Activated CD8-positive, alpha-beta T cell treated with anti-CD3 and anti-CD28 coated beads for 36 hours (primary cell): ENCODE measurements at regions of chr13 and their contacts with region 1.

Region 1: DNA sequence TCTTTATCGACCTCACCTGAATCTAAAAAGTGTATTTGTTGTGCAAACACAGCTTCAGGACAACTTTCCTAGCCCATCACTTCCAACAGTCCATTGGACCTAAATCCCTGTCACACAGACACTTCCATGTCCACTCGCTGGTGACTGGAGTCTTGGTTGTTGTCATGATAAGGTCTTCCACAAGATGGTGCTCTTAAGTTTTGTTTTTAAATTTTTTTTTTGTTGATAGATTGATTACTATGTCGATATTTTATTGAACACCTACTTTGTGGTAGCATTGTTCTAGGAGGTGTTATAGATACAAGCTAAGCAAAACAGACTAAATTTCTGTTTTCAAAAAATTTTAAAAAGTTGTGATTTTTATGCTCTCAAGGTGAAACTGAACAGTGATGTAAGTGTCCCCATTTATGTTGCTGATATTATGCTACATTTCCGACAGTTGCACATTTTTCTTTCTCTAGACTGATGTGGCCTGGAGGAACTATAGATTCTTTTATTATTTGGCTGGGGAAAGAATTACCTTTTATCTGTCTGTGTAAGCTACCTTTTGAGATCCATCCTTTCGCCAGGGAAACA is 8.1 kb upstream of the ERICH6B start:
- DNase-seq: no peak
- ATAC-seq: no peak
- H3K4me3 Mint-ChIP-seq: no peak overlapping the region
- H3K27ac Mint-ChIP-seq: no peak overlapping the region
- H3K4me1 Mint-ChIP-seq: no peaks in the 10 kb centered on the region
- H3K27me3 Mint-ChIP-seq: peaks cover 24% of the 10 kb centered on the region
- CTCF ChIP-seq: peak; percentile 62

Region 2: GRCh38 chr13:45385907-45386553 is 237.6 kb before region 1 on chr13:
- CTCF ChIA-PET with region 1: no interaction called
- POLR2A ChIA-PET with region 1: no interaction called
- intact Hi-C with region 1: no loop called
- DNase-seq: no peak
- ATAC-seq: no peak
- H3K4me3 Mint-ChIP-seq: no peak overlapping the region
- H3K27ac Mint-ChIP-seq: no peak overlapping the region
- H3K4me1 Mint-ChIP-seq: peaks cover 7% of the 10 kb centered on the region
- H3K27me3 Mint-ChIP-seq: no peaks in the 10 kb centered on the region
- CTCF ChIP-seq: no peak

Region 3: GRCh38 chr13:45575146-45575829 is 48.3 kb before region 1 on chr13:
- CTCF ChIA-PET with region 1: no interaction called
- POLR2A ChIA-PET with region 1: no interaction called
- intact Hi-C with region 1: no loop called
- DNase-seq: no peak
- ATAC-seq: no peak
- H3K4me3 Mint-ChIP-seq: no peak overlapping the region
- H3K27ac Mint-ChIP-seq: no peak overlapping the region
- H3K4me1 Mint-ChIP-seq: no peaks in the 10 kb centered on the region
- H3K27me3 Mint-ChIP-seq: peaks cover 8% of the 10 kb centered on the region
- CTCF ChIP-seq: no peak

Region 4: GRCh38 chr13:45718063-45718462 is 94.5 kb after region 1 on chr13:
- CTCF ChIA-PET with region 1: interaction called, 21 read pairs
- POLR2A ChIA-PET with region 1: no interaction called
- intact Hi-C with region 1: loop called (anchors 2 kb)
- DNase-seq: no peak
- ATAC-seq: peak; percentile 55
- H3K4me3 Mint-ChIP-seq: no peak overlapping the region
- H3K27ac Mint-ChIP-seq: no peak overlapping the region
- H3K4me1 Mint-ChIP-seq: no peaks in the 10 kb centered on the region
- H3K27me3 Mint-ChIP-seq: peaks cover 3% of the 10 kb centered on the region
- CTCF ChIP-seq: peak; percentile 68

Region 5: DNA sequence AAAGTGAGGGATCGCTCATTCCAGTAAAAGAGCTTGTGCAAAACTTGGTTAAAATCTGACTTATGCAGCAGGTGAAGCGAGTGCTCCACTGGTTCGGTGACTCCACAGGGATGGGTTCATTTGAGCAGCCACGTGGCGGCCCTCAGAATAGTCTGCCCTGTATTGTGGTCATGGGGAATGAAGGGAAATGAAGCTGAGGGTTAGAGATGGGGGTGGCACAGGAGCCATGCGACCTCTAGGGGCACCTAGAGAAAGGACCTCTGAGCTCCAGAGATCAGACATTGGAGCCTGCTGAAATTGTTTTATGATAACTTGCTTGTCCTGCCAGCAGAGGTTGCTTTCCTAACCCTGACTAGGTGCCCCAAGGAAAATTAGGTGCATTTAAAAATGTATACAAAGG is 105.2 kb after region 1 on chr13:
- CTCF ChIA-PET with region 1: interaction called, 11 read pairs
- POLR2A ChIA-PET with region 1: no interaction called
- intact Hi-C with region 1: no loop called
- DNase-seq: peak; percentile 16
- ATAC-seq: peak; percentile 45
- H3K4me3 Mint-ChIP-seq: no peak overlapping the region
- H3K27ac Mint-ChIP-seq: no peak overlapping the region
- H3K4me1 Mint-ChIP-seq: no peaks in the 10 kb centered on the region
- H3K27me3 Mint-ChIP-seq: peaks cover 1% of the 10 kb centered on the region
- CTCF ChIP-seq: no peak